ENCODE measurements at regions of chr1 and their contacts with region 1.

Region 1: DNA sequence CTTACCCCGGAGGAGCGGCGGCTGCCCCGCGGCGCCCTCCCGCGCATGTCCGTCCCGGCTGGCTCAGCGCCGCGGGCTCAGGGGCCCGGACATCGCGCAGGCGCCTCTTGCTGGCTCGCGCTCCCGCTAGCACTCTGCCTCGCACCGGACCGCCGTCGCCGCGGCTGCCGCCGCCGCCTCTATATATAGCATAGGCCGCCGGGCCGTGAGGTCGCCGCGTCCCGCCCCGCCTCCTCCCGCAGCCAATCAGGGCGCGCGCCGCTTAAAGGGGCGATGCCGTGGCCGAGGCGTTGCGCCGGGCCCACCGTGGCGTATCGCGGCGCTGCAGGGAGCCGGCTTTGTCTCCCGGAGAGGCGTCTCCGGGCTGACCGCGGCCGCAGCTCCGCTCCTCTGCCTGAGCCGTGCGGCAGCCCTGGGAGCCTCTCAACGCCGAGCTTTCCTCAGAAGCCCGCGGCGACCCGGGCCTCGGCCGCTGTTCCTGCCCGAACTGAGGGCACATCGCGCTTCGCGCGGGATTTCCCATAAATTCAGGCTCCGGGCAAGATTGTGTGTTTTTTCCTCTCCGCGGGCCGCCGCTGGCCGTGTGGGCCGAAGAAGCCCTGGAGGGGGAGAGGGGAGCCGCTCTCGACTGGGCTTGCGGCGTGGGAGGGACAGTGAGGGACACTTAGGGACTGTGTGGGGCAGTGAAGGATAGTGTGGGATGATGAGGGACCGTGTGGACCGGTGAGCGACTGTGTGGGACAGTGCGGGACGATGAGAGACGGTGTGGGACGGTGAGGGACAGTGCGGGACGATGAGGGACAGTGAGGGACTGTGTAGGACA is at the start of gene ERRFI1:
- DNase-seq: peak; percentile 93
- ATAC-seq: peak; percentile 81
- H3K4me3 ChIP-seq: peak within 1 kb of the TSS; percentile 66
- H3K27ac ChIP-seq: peak within 1 kb of the TSS; percentile 95
- H3K4me1 ChIP-seq: peaks cover 15% of the 10 kb centered on the region
- H3K27me3 ChIP-seq: no peaks in the 10 kb centered on the region
- CTCF ChIP-seq: no peak
- POLR2A ChIP-seq: peak; percentile 100
- RAD21 ChIP-seq: peak; percentile 20; the same call in 1 of the 2 replicates
- total RNA-seq, gene ERRFI1: 101 and 106 TPM in 2 replicates

Region 2: DNA sequence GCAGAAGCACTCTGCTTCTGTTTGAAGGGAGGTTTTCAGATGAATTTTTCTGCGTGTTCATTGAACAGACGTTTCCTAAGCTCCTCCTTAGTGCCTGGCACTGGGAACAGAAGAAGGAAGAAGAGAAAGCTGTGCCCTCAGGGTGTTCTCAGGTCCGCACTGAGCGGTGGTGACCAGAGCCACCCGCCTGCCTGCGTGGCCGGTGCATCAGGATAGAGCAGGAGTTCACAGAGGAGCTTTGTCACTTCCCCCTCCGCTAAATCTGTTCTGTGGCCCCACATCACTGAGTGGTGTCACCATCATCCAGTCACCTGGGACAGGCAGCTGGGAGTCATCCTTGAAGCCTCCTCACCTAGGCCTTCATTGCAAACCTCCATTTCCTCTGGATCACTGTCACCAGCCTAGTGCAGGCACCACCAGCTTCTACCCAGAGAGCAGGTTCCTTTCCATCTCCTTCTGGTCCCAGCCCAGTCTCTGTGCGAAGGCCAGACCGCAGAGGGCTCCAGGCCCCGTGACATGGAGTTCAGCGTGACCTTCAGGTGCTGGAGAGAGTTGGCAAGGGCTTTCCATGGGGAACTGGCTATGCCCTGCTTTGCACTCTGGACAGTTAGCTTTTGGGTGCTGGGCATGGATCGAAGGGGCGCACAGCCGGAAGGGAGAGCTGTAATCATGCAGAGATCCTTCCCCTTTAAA is 43.1 kb before region 1 on chr1:
- CTCF ChIA-PET with region 1: no interaction called
- POLR2A ChIA-PET with region 1: no interaction called
- dilution Hi-C with region 1: no loop called
- in situ Hi-C with region 1: no loop called
- intact Hi-C with region 1: loop called (anchors 2 kb)
- DNase-seq: no peak
- ATAC-seq: no peak
- H3K4me3 ChIP-seq: no peak overlapping the region
- H3K27ac ChIP-seq: no peak overlapping the region
- H3K4me1 ChIP-seq: peaks cover 2% of the 10 kb centered on the region; the same call in 1 of the 2 replicates
- H3K27me3 ChIP-seq: no peaks in the 10 kb centered on the region
- CTCF ChIP-seq: no peak
- POLR2A ChIP-seq: no peak
- RAD21 ChIP-seq: no peak

Region 3: DNA sequence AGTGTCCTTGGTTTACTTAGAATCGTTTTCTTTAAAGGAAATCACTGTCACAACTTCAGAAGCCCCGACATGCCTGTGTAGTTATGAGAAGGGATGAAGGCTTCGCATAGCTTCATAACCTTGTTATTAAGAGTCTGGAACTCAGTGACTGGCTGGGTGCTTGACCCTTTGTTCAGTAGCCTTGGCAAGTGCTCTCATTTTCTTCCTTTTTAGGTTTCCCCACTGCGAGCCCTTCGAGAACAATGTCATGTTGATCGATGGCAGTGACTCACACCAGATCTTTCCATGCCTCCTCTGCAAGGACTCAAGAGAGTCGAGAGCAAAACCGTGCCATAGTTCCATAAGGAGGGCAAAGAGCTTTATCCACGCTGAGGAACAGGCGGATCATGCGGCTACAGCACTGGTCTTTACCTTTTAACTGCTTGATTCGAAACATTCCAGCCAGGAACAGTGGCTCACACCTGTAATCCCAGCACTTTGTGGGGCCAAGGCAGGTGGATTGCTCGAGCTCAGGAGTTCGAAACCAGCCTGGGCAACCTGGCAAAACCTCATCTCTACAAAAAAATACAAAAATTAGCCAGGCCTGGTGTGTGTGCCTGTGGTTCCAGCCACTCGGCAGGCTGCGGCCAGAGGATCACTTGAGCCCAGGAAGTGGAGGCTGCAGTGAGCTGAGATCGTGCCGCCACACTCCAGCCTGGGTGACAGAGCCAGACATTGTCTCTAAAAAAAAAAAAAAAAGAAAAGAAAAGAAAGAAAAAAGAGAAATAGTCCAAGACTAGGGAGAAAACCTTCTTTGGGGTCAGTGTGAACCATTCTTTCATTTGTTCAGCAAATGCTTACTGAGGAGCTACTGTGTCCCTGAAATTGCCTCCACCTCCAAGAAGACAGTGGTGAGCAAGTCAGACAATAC is 95.2 kb after region 1 on chr1:
- CTCF ChIA-PET with region 1: no interaction called
- POLR2A ChIA-PET with region 1: no interaction called
- dilution Hi-C with region 1: no loop called
- in situ Hi-C with region 1: loop called (anchors 10 kb)
- intact Hi-C with region 1: loop called (anchors 5 kb)
- DNase-seq: peak; percentile 94
- ATAC-seq: peak; percentile 48
- H3K4me3 ChIP-seq: no peak overlapping the region
- H3K27ac ChIP-seq: peak overlapping the region; percentile 93
- H3K4me1 ChIP-seq: peaks cover 33% of the 10 kb centered on the region
- H3K27me3 ChIP-seq: no peaks in the 10 kb centered on the region
- CTCF ChIP-seq: no peak
- POLR2A ChIP-seq: no peak
- RAD21 ChIP-seq: no peak; the same call in 1 of the 2 replicates

Region 4: DNA sequence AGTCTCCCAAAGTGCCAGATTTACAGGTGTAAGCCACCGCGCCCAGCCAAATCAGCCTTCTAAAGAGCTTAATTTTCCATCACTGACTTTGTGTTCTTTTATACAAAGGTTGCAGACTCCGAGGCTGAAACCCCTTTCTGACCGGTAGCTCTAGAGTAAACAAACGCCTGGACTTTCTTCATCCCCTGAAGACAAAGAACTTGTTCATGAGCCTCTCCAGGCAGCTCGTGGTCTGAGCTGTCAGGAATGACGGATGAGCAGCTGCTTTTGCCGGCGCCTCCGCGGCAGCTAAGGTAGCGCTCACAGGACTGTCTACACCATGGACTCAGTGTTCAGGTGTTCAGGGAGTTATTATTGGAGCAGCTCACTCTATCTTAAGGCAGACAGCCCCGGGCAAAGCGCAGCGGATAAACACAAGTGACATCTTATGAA is 128.3 kb after region 1 on chr1:
- CTCF ChIA-PET with region 1: no interaction called
- POLR2A ChIA-PET with region 1: interaction called, 15 read pairs
- dilution Hi-C with region 1: no loop called
- in situ Hi-C with region 1: no loop called
- intact Hi-C with region 1: no loop called
- DNase-seq: peak; percentile 74
- ATAC-seq: peak; percentile 71
- H3K4me3 ChIP-seq: no peak overlapping the region
- H3K27ac ChIP-seq: 0 out of 2 replicates have a peak overlapping the region, but pooled peaks have one; percentile 6
- H3K4me1 ChIP-seq: peaks cover 3% of the 10 kb centered on the region
- H3K27me3 ChIP-seq: no peaks in the 10 kb centered on the region
- CTCF ChIP-seq: no peak
- POLR2A ChIP-seq: no peak
- RAD21 ChIP-seq: no peak

Region 5: DNA sequence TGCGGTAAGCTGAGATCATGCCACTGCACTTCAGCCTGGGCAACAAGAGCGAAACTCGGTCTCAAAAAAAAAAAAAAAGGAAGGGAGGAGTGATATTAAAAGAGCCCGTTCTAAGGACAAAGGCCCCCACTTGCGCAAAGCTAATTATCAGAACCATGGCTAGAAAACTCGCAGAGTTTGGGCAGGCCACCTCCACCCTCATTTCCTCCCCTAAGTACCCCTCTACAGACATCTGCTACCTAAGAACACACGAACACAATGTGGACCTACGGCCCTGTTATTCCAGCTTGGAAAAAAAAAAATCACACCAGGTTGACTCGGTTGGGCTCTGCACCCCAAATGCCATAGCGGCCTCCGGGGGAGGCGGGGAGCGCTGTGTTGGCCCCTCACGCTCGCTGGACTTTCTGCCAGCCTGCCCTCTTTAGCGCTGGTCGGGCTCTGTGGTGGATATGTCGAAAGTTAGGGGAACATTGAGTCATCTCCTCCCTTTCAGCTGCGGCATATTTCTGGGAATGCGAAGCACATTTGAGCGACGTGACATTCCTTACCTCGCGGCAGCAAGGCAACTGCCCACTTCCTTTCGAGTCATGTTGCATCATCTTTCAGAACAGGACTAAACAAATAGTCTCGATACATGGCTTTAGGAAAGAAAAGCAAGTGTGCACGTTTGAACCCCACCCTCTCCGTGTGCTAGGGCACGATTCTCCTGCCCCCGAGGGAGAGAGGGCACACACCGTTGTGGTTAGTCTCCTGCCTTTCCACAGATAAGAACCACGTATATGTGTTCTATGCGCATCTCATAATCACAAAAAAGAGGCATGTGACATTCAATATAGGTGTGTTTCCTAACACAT is 185.5 kb after region 1 on chr1:
- CTCF ChIA-PET with region 1: no interaction called
- POLR2A ChIA-PET with region 1: interaction called, 3 read pairs
- dilution Hi-C with region 1: no loop called
- in situ Hi-C with region 1: loop called (anchors 10 kb)
- intact Hi-C with region 1: no loop called
- DNase-seq: peak; percentile 99
- ATAC-seq: peak; percentile 80
- H3K4me3 ChIP-seq: no peak overlapping the region
- H3K27ac ChIP-seq: peak overlapping the region; percentile 86
- H3K4me1 ChIP-seq: peaks cover 37% of the 10 kb centered on the region
- H3K27me3 ChIP-seq: no peaks in the 10 kb centered on the region
- CTCF ChIP-seq: no peak
- POLR2A ChIP-seq: peak; percentile 45
- RAD21 ChIP-seq: peak; percentile 30

Region 6: GRCh38 chr1:8314346-8315280 is 288.2 kb after region 1 on chr1:
- CTCF ChIA-PET with region 1: interaction called, 8 read pairs
- POLR2A ChIA-PET with region 1: interaction called, 5 read pairs
- dilution Hi-C with region 1: loop called (anchors 25 kb)
- in situ Hi-C with region 1: no loop called
- intact Hi-C with region 1: loop called (anchors 1 kb)
- DNase-seq: peak; percentile 77
- ATAC-seq: peak; percentile 86
- H3K4me3 ChIP-seq: no peak overlapping the region
- H3K27ac ChIP-seq: no peak overlapping the region; the same call in 1 of the 2 replicates
- H3K4me1 ChIP-seq: peaks cover 10% of the 10 kb centered on the region
- H3K27me3 ChIP-seq: no peaks in the 10 kb centered on the region
- CTCF ChIP-seq: peak; percentile 98
- POLR2A ChIP-seq: peak; percentile 70
- RAD21 ChIP-seq: peak; percentile 100